ENCODE measurements at regions of chr1 and their contacts with region 1.

Region 1: GRCh38 chr1:21368515-21369289 is 71.2 kb upstream of the NBPF3 start:
- DNase-seq: peak; percentile 86

Region 2: DNA sequence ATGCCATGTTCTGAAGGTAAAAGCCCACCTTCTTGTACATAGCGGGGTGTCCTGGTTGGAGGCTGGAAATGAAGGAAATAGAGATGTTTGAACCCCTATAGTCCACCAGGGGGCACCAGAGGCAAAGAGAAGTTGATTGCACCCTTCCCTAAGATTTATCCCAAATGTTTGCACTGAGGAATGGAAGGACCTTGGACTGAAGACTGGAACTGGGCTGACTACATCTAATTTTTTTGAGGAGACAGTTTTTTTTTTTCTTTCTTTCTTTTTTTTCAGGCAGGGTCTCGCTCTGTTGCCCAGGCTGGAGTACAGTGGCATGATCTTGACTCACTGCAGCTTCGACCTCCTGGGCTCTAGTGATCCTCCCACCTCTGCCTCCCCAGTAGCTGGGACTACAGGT is 136.7 kb before region 1 on chr1:
- intact Hi-C with region 1: loop called (anchors 1 kb)
- DNase-seq: no peak

Region 3: DNA sequence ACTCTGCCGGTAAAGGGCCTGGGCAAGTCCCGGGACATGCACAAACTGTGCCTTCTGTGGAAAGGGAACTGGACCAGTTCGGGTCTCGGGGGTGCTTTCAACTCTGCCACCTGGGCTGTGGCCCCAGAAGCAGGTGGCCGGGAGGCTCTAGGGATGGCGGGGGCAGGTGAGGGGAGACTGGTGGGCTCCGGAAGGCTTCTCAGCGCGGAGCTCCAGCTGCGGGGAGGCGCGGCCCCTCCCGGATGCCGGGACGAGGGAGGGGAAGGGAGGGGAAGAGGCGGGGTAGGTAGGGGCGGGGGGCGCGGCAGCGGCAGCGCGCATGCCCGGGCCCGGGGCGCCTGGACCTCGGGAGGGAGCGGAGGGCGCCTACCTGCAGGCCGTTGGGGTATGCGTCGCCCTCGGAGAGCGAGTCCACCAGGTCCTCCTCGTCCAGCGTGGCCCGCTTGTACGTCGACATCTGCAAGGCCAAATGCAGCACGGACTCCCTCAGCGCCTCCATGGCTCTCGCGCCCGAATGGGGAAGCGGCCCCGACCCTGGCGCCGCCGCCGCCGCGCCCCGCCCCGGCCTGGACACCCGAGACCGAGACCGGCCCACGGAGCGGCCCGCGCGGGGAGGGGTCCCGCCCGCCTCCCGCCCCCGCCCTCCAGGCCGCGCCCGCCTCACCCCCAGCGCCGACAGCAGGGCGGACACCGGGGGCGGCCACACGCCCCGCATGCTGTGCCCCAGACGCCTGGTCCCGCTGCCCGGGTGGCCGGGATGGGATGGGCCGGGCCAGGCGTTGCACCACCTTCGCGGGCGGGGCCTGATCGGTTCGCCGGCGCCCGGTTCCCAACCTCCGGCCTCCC is 78.8 kb before region 1 on chr1 and contains the start of gene ECE1:
- intact Hi-C with region 1: loop called (anchors 5 kb)
- DNase-seq: peak; percentile 84
- total RNA-seq, gene ECE1: 55.8 TPM

Region 4: DNA sequence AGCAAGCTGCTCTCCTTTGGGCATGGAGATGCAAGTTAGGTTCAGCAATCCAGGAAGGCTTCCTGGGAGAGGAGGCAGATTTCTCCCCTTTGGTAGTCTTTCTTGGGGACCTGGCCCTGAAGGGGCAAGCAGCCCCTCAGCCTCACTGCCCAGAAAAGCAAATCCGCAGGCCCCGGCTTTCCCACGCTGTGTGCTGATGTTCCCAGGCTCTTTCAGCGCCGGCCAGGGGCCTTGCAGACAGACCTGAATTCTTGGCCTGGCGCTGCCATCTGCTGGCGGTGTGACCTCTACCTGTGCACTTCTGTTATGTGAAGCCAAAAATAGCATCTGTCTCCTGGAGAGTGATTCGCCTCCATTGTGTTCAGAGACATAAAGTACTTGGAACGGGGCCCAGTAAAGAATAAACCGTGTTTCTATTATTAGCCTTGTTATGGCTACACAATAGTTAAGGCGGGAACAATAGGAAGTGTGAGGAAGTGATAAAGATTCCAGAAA is 205.3 kb after region 1 on chr1:
- intact Hi-C with region 1: loop called (anchors 2 kb)
- DNase-seq: peak; percentile 93

Region 5: DNA sequence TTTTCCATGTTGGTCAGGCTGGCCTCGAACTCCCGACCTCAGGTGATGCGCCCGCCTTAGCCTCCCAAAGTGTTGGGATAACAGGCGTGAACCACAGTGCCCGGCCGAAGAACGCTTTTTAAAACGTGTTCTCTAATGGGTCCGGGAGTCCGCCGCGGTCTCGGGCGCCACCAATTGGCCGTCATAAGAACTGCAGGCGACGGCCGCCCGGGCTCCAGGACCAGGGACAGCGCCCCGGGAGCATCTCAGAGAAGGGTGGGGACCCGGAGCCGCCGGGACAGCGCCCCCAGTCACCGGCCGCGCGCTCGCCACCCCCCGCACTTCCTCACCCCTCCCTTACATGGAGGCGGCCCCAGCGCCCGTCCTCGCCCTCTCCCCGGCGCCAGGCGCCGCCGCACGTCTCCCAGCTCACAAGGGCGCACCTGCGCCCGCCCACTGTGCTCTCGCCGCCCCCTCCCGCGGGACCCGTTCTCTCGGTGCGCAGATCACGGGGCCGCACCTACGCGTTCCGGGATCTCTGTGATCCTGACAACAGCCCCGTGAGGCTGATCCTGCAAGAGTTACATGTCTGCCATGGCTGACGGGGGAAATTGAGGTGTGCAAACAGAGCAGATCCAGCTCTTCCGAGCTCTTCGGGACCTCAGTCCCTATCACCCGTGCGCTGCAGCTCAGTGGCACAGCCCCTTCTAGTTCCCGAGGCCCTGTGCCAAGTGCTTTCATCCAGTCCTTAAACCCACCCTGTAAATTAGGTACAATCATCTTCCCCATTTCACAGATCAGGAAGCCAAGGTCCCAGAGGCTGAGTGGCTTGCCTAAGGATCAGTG is 290.6 kb after region 1 on chr1:
- intact Hi-C with region 1: loop called (anchors 5 kb)
- DNase-seq: peak; percentile 90

Region 6: GRCh38 chr1:21963477-21964217 is 594.9 kb after region 1 on chr1:
- intact Hi-C with region 1: no loop called
- DNase-seq: peak; percentile 92

Measured in cardiac septum (tissue), 1 donor.